Activated B cell treated with CpG ODN at 0.5 μM for 24 hours (primary cell): ENCODE measurements at regions of chr13 and their contacts with region 1.

Region 1: DNA sequence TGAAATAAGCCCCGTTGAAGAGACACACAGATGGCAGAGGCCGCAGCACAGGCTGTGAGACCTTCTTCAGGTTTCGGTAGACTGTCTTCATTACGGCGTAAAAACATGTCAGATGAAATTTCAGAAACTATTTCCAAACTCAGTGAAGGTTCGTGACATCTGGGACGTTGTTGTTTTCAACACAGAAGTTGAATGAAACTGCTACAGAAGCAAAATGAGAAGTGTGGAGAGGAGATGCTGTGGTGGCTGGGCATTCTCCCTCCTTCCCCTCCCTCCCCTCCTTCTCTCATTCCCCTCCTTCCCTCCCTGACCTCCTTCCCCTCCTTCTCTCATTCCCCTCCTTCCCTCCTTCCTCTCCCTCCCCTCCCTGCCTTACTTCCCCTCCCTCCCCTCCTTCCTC is 113.6 kb downstream of the ATP11A start:
- DNase-seq: no peak
- ATAC-seq: peak; percentile 40
- H3K4me3 Mint-ChIP-seq: no peak overlapping the region
- H3K27ac Mint-ChIP-seq: peak overlapping the region; percentile 60
- H3K4me1 Mint-ChIP-seq: peaks cover 26% of the 10 kb centered on the region
- H3K27me3 Mint-ChIP-seq: no peaks in the 10 kb centered on the region
- CTCF ChIP-seq: no peak

Region 2: DNA sequence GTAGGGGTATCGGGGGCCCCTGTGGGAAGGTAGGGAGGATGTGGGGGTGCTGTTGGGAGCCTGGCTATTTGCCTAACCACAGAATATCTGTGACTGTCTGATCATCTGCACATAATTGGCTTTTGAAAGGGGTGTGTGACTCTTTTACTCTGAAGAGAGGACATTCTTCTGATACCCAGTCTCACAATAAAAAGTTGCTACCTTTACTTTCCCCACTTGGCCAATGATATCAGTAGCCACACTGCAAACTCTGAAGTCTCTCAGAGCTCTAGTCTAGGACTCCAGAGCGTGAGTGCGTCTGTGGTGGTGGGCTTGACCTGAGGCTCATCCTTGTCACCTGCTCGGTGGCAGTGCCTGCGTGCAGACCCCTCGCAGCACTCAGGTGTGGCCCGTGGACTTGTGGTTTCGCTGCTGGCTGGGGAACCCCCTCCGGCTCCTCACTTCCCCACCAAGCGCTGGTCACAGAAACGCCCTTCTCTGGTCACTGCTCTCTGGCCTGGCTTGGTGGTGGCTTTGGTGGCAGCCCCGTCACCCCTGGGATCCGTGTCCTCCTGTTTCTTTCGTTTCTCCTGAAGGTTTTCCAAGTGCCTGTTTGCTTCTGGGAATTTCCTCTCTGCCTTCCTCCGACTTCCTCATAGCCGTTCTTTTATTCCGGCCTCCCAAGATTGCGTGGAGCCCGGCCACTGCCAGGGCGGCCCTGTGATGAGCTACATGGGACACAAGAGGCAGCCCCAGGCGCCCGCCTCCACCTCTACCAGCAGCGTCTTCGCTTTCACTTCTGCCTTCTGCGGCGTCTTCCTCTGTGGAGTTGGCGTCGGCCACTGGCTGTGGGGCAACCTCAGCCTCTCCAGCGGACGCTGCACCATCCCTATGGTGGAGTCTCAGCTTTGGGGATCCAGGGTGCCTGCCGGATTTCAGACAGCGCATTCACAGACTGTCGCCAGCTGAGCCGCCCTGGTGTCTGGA is 35.6 kb before region 1 on chr13:
- CTCF ChIA-PET with region 1: no interaction called
- POLR2A ChIA-PET with region 1: interaction called, 5 read pairs
- intact Hi-C with region 1: loop called (anchors 5 kb)
- DNase-seq: peak; percentile 22
- ATAC-seq: peak; percentile 85
- H3K4me3 Mint-ChIP-seq: peak overlapping the region; percentile 80
- H3K27ac Mint-ChIP-seq: peak overlapping the region; percentile 77
- H3K4me1 Mint-ChIP-seq: peaks cover 25% of the 10 kb centered on the region
- H3K27me3 Mint-ChIP-seq: no peaks in the 10 kb centered on the region
- CTCF ChIP-seq: no peak

Region 3: DNA sequence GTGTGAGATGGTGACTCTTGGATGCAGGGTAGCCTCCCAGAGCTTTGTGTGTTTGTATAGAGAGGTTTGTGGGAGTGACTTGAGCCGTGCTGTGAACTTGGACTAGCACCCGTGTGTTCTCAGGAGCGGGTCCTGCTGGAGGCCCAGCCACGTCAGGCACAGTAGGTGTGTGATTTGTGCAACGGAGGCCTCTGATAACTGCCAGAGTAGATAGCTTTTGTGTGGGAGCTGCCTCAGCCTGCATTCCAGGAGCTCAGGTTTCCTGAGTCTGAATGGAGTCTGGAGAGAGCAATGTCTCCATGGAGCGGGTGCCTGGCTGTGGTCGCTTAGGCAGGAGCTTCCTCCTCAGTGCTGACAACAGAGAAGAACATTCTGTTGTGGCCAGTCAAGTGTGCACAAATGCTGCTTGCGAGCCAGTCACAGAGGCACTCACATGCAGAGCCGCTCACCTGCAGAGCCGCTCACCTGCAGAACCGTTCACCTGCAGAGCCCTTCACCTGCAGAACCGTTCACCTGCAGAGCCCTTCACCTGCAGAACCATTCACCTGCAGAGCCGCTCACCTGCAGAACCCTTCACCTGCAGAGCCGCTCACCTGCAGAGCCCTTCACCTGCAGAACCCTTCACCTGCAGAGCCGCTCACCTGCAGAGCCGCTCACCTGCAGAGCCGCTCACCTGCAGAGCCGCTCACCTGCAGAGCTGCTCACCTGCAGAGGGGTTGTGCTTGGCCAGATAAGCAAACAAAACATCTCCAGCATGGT is 813.7 kb after region 1 on chr13:
- CTCF ChIA-PET with region 1: no interaction called
- POLR2A ChIA-PET with region 1: interaction called, 14 read pairs
- intact Hi-C with region 1: no loop called
- DNase-seq: no peak
- ATAC-seq: no peak
- H3K4me3 Mint-ChIP-seq: no peak overlapping the region
- H3K27ac Mint-ChIP-seq: no peak overlapping the region
- H3K4me1 Mint-ChIP-seq: no peaks in the 10 kb centered on the region
- H3K27me3 Mint-ChIP-seq: no peaks in the 10 kb centered on the region
- CTCF ChIP-seq: no peak